ENCODE measurements at regions of chr16 and their contacts with region 1.

Region 1: DNA sequence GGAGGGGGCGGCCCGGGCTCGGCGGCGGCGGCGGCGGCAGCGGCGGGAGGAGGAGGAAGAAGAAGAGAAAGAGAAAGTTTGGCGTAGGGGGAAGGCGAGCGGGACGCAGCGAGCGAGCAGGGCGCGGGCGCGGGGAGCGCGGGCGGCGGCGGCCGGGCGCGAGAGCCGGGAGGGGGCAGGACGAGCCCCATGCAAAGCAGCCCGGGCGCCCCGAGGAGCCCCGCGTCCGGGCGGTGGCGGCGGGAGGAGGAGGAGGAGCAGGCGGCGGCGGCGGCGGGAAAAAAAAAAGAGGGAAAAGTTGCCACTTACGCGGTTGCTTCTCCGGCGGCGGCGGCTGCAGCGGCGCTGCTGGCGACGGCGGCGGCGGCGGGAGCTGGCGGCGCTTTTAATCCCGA is 10.3 kb upstream of the ZFHX3 start:
- DNase-seq: no peak
- H3K4me3 ChIP-seq: peak overlapping the region; percentile 76 to 86 (median 84)
- H3K27ac ChIP-seq: peak overlapping the region; percentile 92 to 96 (median 94)
- H3K4me1 ChIP-seq: peaks cover 25 to 71% (median 58%) of the 10 kb centered on the region in 4 donors
- H3K27me3 ChIP-seq: peaks cover 0 to 9% (median 3%) of the 10 kb centered on the region in 4 donors
- CTCF ChIP-seq: peak in 1 of 3 experiments; percentile 10
- EP300 ChIP-seq: no peak
- POLR2A ChIP-seq: no peak

Region 2: GRCh38 chr16:72093448-72094265 is 964.6 kb before region 1 on chr16 and contains the starts of genes DHX38 and TXNL4B:
- intact Hi-C with region 1: loop called (anchors 10 kb)
- DNase-seq: peak; percentile 98
- H3K4me3 ChIP-seq: peak within 1 kb of the TSS; percentile 85 to 96 (median 89)
- H3K27ac ChIP-seq: peak within 1 kb of the TSS; percentile 91 to 95 (median 92)
- H3K4me1 ChIP-seq: peaks cover 30 to 45% (median 38%) of the 10 kb centered on the region in 4 donors
- H3K27me3 ChIP-seq: no peaks in the 10 kb centered on the region
- CTCF ChIP-seq: no peak
- EP300 ChIP-seq: no peak
- POLR2A ChIP-seq: peak; percentile 61
- total RNA-seq, gene DHX38: 59.0 to 70.2 (median 62.8) TPM
- total RNA-seq, gene TXNL4B: 4.6 to 7.5 (median 6.4) TPM

Region 3: GRCh38 chr16:72989579-72990551 is 68.4 kb before region 1 on chr16:
- intact Hi-C with region 1: loop called (anchors 5 kb)
- DNase-seq: peak; percentile 95
- H3K4me3 ChIP-seq: peak overlapping the region; percentile 1 to 27 (median 18)
- H3K27ac ChIP-seq: peak overlapping the region; percentile 76 to 81 (median 78)
- H3K4me1 ChIP-seq: peaks cover 61 to 97% (median 89%) of the 10 kb centered on the region in 4 donors
- H3K27me3 ChIP-seq: no peaks in the 10 kb centered on the region
- CTCF ChIP-seq: no peak
- EP300 ChIP-seq: peak; percentile 69
- POLR2A ChIP-seq: no peak

Region 4: DNA sequence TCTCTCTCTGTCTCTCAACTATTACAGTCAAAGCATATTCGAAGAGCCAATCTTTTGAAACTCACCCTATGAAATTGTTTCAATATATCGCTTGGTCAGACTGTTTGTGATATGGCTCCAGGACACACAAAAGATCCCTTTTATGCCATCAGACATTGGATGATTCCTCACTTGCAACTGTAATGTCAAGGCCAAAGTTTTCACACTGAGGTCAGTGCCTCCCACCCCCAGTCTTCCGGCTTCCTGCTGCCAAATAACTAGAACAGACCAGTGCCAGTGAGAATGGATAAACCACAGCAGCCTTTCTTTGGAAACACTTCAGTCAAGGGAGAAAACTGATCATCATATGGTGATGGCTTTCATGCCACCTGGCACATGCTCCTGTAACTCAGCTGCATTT is 311.6 kb after region 1 on chr16:
- intact Hi-C with region 1: no loop called
- DNase-seq: no peak
- H3K4me3 ChIP-seq: no peak overlapping the region
- H3K27ac ChIP-seq: no peak overlapping the region
- H3K4me1 ChIP-seq: peaks cover 0 to 3% (median 0%) of the 10 kb centered on the region in 4 donors
- H3K27me3 ChIP-seq: peaks cover 0 to 27% (median 0%) of the 10 kb centered on the region in 4 donors
- CTCF ChIP-seq: no peak
- EP300 ChIP-seq: no peak
- POLR2A ChIP-seq: no peak